HCT116 (cell line): ENCODE measurements at regions of chr10 and their contacts with region 1.

Region 1: GRCh38 chr10:132452631-132453469 is 55.9 kb downstream of the PWWP2B start:
- DNase-seq: no peak
- ATAC-seq: peak; percentile 64
- H3K4me3 ChIP-seq: peak overlapping the region in 1 of 2 experiments; percentile 26; a peak in 1 of 4 replicates
- H3K27ac ChIP-seq: peak overlapping the region; percentile 51; the same call in 1 of the 2 replicates
- H3K4me1 ChIP-seq: peaks cover 17 to 21% of the 10 kb centered on the region in 2 experiments
- H3K27me3 ChIP-seq: no peaks in the 10 kb centered on the region
- CTCF ChIP-seq: peak; percentile 59 to 78 (median 68)
- POLR2A ChIP-seq: no peak
- RAD21 ChIP-seq: peak; percentile 90

Region 2: DNA sequence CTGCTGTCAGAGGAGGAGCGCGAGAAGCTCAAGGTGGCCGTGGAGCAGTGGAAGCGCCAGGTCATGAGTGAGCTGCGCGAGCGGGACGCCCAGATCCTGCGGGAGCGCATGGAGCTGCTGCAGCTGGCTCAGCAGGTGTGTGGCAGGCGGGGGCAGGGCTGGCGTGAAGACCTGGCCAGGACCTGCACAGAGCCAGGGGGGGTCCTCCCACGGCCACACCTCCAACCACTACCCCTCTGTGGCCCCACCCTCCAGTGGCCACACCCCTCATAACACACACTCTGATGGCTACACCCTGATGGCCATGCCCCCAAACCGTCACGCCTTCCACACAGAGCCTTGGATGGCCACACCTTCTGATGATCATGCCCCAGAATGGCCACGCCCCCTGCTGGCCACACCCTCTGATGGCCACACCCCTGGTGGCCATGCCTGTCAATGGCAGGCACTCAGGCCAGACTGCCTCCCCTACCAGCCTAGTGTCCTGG is 289.5 kb before region 1 on chr10:
- CTCF ChIA-PET with region 1: no interaction called
- POLR2A ChIA-PET with region 1: no interaction called
- RAD21 ChIA-PET with region 1: no interaction called
- intact Hi-C with region 1: no loop called
- DNase-seq: peak; percentile 79
- ATAC-seq: peak; percentile 95
- H3K4me3 ChIP-seq: peak overlapping the region in 1 of 2 experiments; percentile 44; a peak in 2 of 4 replicates
- H3K27ac ChIP-seq: no peak overlapping the region; the same call in 1 of the 2 replicates
- H3K4me1 ChIP-seq: peaks cover 17 to 42% of the 10 kb centered on the region in 2 experiments; a peak in 3 of 4 replicates
- H3K27me3 ChIP-seq: no peaks in the 10 kb centered on the region
- CTCF ChIP-seq: peak in 1 of 3 experiments; percentile 43; a peak in 2 of 6 replicates
- POLR2A ChIP-seq: no peak
- RAD21 ChIP-seq: no peak

Region 3: DNA sequence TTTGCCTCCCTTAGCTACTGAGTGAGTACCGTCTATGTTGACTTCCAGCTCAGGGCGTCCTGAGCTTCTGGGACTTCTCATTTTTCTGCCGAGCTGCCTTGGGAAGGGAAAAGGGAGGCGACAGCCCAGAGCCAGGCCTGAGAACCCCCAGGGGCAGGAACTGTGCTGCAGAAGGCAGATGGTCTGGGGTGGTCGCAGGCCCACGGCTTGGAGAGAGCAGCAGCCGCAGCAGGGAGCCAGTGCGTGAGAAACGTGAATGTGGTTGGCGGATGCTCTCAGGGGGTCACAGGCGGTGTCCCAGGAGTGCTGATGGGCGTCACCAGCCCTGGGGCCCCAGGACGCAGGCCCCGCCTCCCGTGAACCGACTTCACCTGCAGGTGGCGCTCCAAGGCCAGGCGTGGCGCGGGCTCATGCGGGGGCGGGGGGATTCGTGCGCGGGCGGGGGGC is 65.1 kb before region 1 on chr10:
- CTCF ChIA-PET with region 1: no interaction called
- POLR2A ChIA-PET with region 1: no interaction called
- RAD21 ChIA-PET with region 1: no interaction called
- intact Hi-C with region 1: loop called (anchors 1 kb)
- DNase-seq: no peak
- ATAC-seq: peak; percentile 81
- H3K4me3 ChIP-seq: no peak overlapping the region
- H3K27ac ChIP-seq: peak overlapping the region; percentile 48; the same call in 1 of the 2 replicates
- H3K4me1 ChIP-seq: peaks cover 0 to 5% of the 10 kb centered on the region in 2 experiments; a peak in 1 of 4 replicates
- H3K27me3 ChIP-seq: no peaks in the 10 kb centered on the region
- CTCF ChIP-seq: peak in 2 of 3 experiments; percentile 42 to 58; a peak in 4 of 6 replicates
- POLR2A ChIP-seq: no peak
- RAD21 ChIP-seq: peak; percentile 79